ENCODE measurements at regions of chr2 and their contacts with region 1.

Region 1: DNA sequence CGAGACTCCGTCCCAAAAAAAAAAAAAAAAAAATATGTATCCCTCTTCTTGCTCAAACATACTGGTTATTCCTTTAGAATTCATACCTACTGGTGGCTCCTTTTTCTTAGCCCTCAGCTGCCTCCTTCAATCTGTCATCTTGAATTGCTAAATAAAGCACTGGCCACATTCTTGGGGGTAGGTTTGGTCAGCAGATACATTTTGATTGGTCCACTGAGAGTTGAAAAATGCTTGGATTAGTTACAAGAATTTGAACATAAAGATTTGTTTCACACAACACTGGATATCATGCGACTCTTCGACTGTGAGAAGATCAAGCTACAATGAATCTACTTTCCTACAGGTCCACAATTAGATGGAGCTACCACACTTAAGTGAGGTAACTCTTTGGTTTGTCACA is 906.1 kb upstream of the SLC39A10 start:
- DNase-seq: no peak
- H3K4me3 ChIP-seq: no peak overlapping the region
- H3K27ac ChIP-seq: no peak overlapping the region
- H3K4me1 ChIP-seq: no peaks in the 10 kb centered on the region
- H3K27me3 ChIP-seq: no peaks in the 10 kb centered on the region
- CTCF ChIP-seq: no peak

Region 2: GRCh38 chr2:194698012-194698411 is 52.9 kb before region 1 on chr2:
- CTCF ChIA-PET with region 1: no interaction called
- dilution Hi-C with region 1: no loop called
- in situ Hi-C with region 1: no loop called
- intact Hi-C with region 1: loop called (anchors 10 kb)
- DNase-seq: no peak
- H3K4me3 ChIP-seq: no peak overlapping the region
- H3K27ac ChIP-seq: no peak overlapping the region
- H3K4me1 ChIP-seq: no peaks in the 10 kb centered on the region
- H3K27me3 ChIP-seq: no peaks in the 10 kb centered on the region
- CTCF ChIP-seq: no peak

Region 3: GRCh38 chr2:194718881-194719280 is 32.0 kb before region 1 on chr2:
- CTCF ChIA-PET with region 1: no interaction called
- dilution Hi-C with region 1: no loop called
- in situ Hi-C with region 1: no loop called
- intact Hi-C with region 1: no loop called
- DNase-seq: no peak
- H3K4me3 ChIP-seq: no peak overlapping the region
- H3K27ac ChIP-seq: no peak overlapping the region
- H3K4me1 ChIP-seq: no peaks in the 10 kb centered on the region
- H3K27me3 ChIP-seq: no peaks in the 10 kb centered on the region
- CTCF ChIP-seq: no peak

Region 4: GRCh38 chr2:194968558-194968957 is 217.6 kb after region 1 on chr2:
- CTCF ChIA-PET with region 1: no interaction called
- dilution Hi-C with region 1: no loop called
- in situ Hi-C with region 1: no loop called
- intact Hi-C with region 1: no loop called
- DNase-seq: no peak
- H3K4me3 ChIP-seq: no peak overlapping the region
- H3K27ac ChIP-seq: no peak overlapping the region
- H3K4me1 ChIP-seq: no peaks in the 10 kb centered on the region
- H3K27me3 ChIP-seq: no peaks in the 10 kb centered on the region
- CTCF ChIP-seq: no peak